Left cardiac atrium (tissue), 4 donors: ENCODE measurements at regions of chr11 and their contacts with region 1.

Region 1: DNA sequence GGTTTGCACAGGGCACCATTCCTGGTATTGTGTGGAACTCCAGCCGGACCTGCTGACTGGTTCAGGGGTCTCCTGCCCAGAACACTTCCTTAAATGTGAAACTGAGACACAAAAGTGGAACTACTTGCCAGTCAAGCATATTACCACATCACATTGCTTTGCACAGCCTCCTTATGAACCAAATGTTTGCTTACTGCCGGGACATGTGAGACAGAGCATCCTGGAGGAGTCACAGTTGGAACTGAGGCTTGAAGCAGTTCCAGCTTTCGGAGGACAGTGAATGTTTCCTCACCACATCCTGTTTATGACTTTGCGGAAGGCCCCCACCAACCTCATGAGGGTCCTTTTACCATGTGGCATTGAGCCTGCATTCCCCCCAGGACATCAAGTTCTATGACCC is 105.8 kb upstream of the ARHGAP42 start:
- DNase-seq: no peak
- ATAC-seq: no peak

Region 2: DNA sequence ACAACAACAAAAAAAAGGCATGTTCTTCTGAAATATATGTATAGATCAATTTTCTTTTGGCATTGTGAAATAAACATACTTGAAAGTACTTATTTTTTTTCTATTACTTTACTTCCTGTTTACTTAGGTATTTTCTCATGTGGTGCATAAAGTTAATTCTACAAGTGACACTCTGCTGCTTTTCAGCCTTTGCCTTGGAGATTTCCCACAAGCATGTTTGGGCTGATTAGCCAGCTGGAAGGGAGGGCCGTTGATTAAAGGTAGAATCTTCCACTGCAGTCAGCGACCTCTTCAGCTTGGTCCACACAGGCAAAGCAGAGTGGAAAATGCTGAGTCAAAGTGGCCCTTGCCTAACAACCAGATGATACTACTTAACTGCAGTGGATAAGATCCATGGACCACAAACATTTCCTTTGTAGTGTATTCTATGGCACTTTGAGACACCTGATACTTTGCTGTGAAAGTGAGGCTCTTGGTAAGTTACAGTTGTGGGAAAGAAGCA is 281.8 kb after region 1 on chr11:
- intact Hi-C with region 1: loop called in 1 of 2 experiments (anchors 5 kb)
- DNase-seq: no peak
- ATAC-seq: peak in 1 of 2 donors; percentile 75